Caco-2 (cell line): ENCODE measurements at regions of chr3 and their contacts with region 1.

Region 1: DNA sequence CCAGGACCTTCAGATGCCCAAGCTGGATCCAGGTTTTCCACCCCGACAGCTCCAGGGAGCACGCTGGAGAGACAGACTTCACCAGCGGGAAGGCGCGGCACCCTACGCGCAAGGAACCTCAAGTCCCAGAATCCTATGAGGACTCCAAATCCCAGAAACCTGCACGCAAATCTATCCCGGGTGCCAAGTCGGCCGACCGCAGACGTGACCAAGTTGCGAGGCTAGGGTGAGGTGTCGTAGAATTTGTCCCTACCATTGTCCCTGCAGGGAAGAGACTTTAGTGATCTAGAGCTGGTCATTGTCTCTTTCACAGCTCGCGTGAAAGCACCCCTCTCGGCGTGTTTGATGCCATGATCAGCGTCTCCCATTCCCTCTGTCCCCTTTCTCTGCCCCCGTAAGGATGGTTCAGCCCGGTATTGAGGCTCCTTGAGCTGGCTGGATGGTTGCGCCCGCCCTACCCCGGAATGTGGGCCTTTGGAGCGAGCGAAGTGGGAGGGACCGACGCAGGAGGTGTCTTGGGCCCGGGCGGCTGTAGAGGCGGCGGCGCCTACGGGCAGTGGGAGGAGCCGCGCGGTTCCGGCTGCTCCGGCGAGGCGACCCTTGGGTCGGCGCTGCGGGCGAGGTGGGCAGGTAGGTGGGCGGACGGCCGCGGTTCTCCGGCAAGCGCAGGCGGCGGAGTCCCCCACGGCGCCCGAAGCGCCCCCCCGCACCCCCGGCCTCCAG is at the start of gene PRKCI:
- DNase-seq: peak; percentile 95 to 97
- H3K4me3 ChIP-seq: peak within 1 kb of the TSS; percentile 91
- H3K4me3 Mint-ChIP-seq: peak within 1 kb of the TSS; percentile 88
- H3K27ac Mint-ChIP-seq: peak within 1 kb of the TSS; percentile 99
- H3K4me1 ChIP-seq: 0 out of 2 replicates have a peak, but pooled peaks cover 5% of the 10 kb centered on the region
- H3K4me1 Mint-ChIP-seq: no peaks in the 10 kb centered on the region
- H3K27me3 ChIP-seq: no peaks in the 10 kb centered on the region
- H3K27me3 Mint-ChIP-seq: no peaks in the 10 kb centered on the region
- CTCF ChIP-seq: no peak
- total RNA-seq, gene PRKCI: 44.2 and 45.8 TPM in 2 replicates

Region 2: GRCh38 chr3:170180908-170181879 is 40.9 kb before region 1 on chr3 and contains the start of gene PHC3:
- CTCF ChIA-PET with region 1: no interaction called
- POLR2A ChIA-PET with region 1: no interaction called
- intact Hi-C with region 1: loop called (anchors 1 kb)
- DNase-seq: peak; percentile 93 to 95
- H3K4me3 ChIP-seq: peak within 1 kb of the TSS; percentile 54
- H3K4me3 Mint-ChIP-seq: peak within 1 kb of the TSS; percentile 95
- H3K27ac Mint-ChIP-seq: peak within 1 kb of the TSS; percentile 97
- H3K4me1 ChIP-seq: peaks cover 10% of the 10 kb centered on the region
- H3K4me1 Mint-ChIP-seq: peaks cover 12% of the 10 kb centered on the region
- H3K27me3 ChIP-seq: no peaks in the 10 kb centered on the region
- H3K27me3 Mint-ChIP-seq: no peaks in the 10 kb centered on the region
- CTCF ChIP-seq: peak in 1 of 2 experiments; percentile 8
- total RNA-seq, gene PHC3: 29.8 and 37.7 TPM in 2 replicates

Region 3: GRCh38 chr3:170207717-170208116 is 14.4 kb before region 1 on chr3:
- CTCF ChIA-PET with region 1: no interaction called
- POLR2A ChIA-PET with region 1: no interaction called
- intact Hi-C with region 1: loop called (anchors 2 kb)
- DNase-seq: no peak
- H3K4me3 ChIP-seq: no peak overlapping the region
- H3K4me3 Mint-ChIP-seq: no peak overlapping the region
- H3K27ac Mint-ChIP-seq: no peak overlapping the region
- H3K4me1 ChIP-seq: 0 out of 2 replicates have a peak, but pooled peaks cover 8% of the 10 kb centered on the region
- H3K4me1 Mint-ChIP-seq: peaks cover 7% of the 10 kb centered on the region
- H3K27me3 ChIP-seq: no peaks in the 10 kb centered on the region
- H3K27me3 Mint-ChIP-seq: no peaks in the 10 kb centered on the region
- CTCF ChIP-seq: no peak

Region 4: DNA sequence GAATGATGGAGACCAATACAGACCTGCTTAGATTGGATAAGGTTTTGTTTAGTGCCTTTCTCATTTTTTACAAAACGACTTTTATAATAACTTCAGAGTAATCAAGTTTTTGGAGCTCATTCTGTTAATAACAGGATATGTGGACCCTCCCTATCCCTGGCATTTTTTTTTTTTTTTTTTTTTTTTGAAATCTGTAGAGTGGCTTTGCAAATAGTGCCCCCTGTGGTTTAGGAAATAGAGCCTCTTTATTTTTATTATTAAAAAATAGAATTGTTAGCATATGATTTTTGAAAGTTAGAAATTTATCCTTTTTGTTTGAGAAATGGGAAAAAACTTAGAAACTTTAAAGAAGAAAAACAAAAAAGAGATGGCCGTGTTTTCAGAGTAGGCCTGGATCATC is 146.8 kb after region 1 on chr3:
- CTCF ChIA-PET with region 1: no interaction called
- POLR2A ChIA-PET with region 1: no interaction called
- intact Hi-C with region 1: no loop called
- DNase-seq: no peak
- H3K4me3 ChIP-seq: no peak overlapping the region
- H3K4me3 Mint-ChIP-seq: no peak overlapping the region
- H3K27ac Mint-ChIP-seq: no peak overlapping the region
- H3K4me1 ChIP-seq: no peaks in the 10 kb centered on the region
- H3K4me1 Mint-ChIP-seq: no peaks in the 10 kb centered on the region
- H3K27me3 ChIP-seq: no peaks in the 10 kb centered on the region
- H3K27me3 Mint-ChIP-seq: no peaks in the 10 kb centered on the region
- CTCF ChIP-seq: peak in 1 of 2 experiments; percentile 38